ENCODE measurements at regions of chr6 and their contacts with region 1.

Region 1: GRCh38 chr6:144284783-144285547 is at the start of gene UTRN:
- DNase-seq: peak; percentile 87 to 92 (median 88)
- ATAC-seq: peak; percentile 71 to 86 (median 81)
- H3K4me3 ChIP-seq: peak within 1 kb of the TSS; percentile 67 to 92 (median 86)
- H3K27ac ChIP-seq: peak within 1 kb of the TSS; percentile 95 to 99 (median 98)
- H3K4me1 ChIP-seq: peaks cover 0 to 31% (median 11%) of the 10 kb centered on the region in 12 donors
- H3K27me3 ChIP-seq: no peaks in the 10 kb centered on the region
- CTCF ChIP-seq: peak in 1 of 12 donors; percentile 4
- POLR2A ChIP-seq: peak in 1 of 2 donors; percentile 60
- total RNA-seq, gene UTRN: 69.3 to 129 (median 86.0) TPM

Region 2: GRCh38 chr6:144095331-144096002 is 189.5 kb before region 1 on chr6 and contains the start of gene SF3B5:
- intact Hi-C with region 1: loop called in 2 of 10 experiments (anchors 10 kb)
- DNase-seq: peak; percentile 98 to 99 (median 99)
- ATAC-seq: peak; percentile 100
- H3K4me3 ChIP-seq: peak within 1 kb of the TSS; percentile 49 to 95 (median 89)
- H3K27ac ChIP-seq: peak within 1 kb of the TSS in 11 of 12 donors; percentile 68 to 87 (median 83)
- H3K4me1 ChIP-seq: peaks cover 0 to 28% (median 14%) of the 10 kb centered on the region in 12 donors
- H3K27me3 ChIP-seq: no peaks in the 10 kb centered on the region
- CTCF ChIP-seq: no peak
- POLR2A ChIP-seq: peak in 1 of 2 donors; percentile 62
- total RNA-seq, gene SF3B5: 99.5 to 240 (median 124) TPM

Region 3: GRCh38 chr6:144158133-144158532 is 126.8 kb before region 1 on chr6:
- intact Hi-C with region 1: loop called in 5 of 10 experiments (anchors 5 to 10 kb)
- DNase-seq: peak in 4 of 5 donors; percentile 58 to 71 (median 68)
- ATAC-seq: peak; percentile 89 to 93 (median 90)
- H3K4me3 ChIP-seq: no peak overlapping the region
- H3K27ac ChIP-seq: peak overlapping the region in 10 of 12 donors; percentile 28 to 84 (median 53)
- H3K4me1 ChIP-seq: peaks cover 4 to 95% (median 23%) of the 10 kb centered on the region in 12 donors
- H3K27me3 ChIP-seq: no peaks in the 10 kb centered on the region
- CTCF ChIP-seq: no peak
- POLR2A ChIP-seq: peak in 1 of 2 donors; percentile 12

Region 4: GRCh38 chr6:144343701-144344428 is 58.9 kb after region 1 on chr6:
- intact Hi-C with region 1: loop called in 4 of 10 experiments (anchors 5 to 10 kb)
- DNase-seq: peak in 2 of 5 donors; percentile 37 to 47
- ATAC-seq: peak; percentile 63 to 86 (median 76)
- H3K4me3 ChIP-seq: peak overlapping the region in 11 of 12 donors; percentile 19 to 54 (median 36)
- H3K27ac ChIP-seq: peak overlapping the region; percentile 40 to 82 (median 70)
- H3K4me1 ChIP-seq: peaks cover 17 to 99% (median 77%) of the 10 kb centered on the region in 12 donors
- H3K27me3 ChIP-seq: no peaks in the 10 kb centered on the region
- CTCF ChIP-seq: no peak
- POLR2A ChIP-seq: no peak

Region 5: GRCh38 chr6:144423167-144423566 is 138.2 kb after region 1 on chr6:
- intact Hi-C with region 1: loop called in 4 of 10 experiments (anchors 10 kb)
- DNase-seq: no peak
- ATAC-seq: no peak
- H3K4me3 ChIP-seq: no peak overlapping the region
- H3K27ac ChIP-seq: no peak overlapping the region
- H3K4me1 ChIP-seq: peaks cover 0 to 21% (median 8%) of the 10 kb centered on the region in 12 donors
- H3K27me3 ChIP-seq: no peaks in the 10 kb centered on the region
- CTCF ChIP-seq: no peak
- POLR2A ChIP-seq: no peak

Region 6: DNA sequence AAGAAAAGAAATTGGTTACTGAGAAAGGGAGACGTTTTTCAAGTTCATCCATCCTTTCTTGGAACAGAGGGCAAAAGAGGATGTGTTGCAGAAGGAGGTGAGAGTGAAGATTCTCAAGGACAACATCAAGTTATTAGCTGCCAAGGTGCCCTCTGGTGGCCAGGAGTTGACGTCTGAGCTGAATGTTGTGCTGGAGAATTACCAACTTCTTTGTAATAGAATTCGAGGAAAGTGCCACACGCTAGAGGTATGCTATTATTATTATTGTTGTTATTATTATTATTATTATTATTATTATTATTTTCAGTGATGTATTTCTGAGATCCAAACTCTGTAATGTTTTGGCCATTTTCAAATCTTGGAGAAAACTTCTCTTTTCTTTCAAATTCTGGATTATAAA is 197.2 kb after region 1 on chr6:
- intact Hi-C with region 1: loop called in 9 of 10 experiments (anchors 1 to 10 kb)
- DNase-seq: peak; percentile 69 to 77 (median 72)
- ATAC-seq: peak in 2 of 4 donors; percentile 23 to 41
- H3K4me3 ChIP-seq: no peak overlapping the region
- H3K27ac ChIP-seq: no peak overlapping the region
- H3K4me1 ChIP-seq: peaks cover 0 to 38% (median 21%) of the 10 kb centered on the region in 12 donors
- H3K27me3 ChIP-seq: no peaks in the 10 kb centered on the region
- CTCF ChIP-seq: peak; percentile 50 to 80 (median 66)
- POLR2A ChIP-seq: no peak

Measured in heart left ventricle (tissue), 16 donors.